Caco-2 (cell line): ENCODE measurements at regions of chr1 and their contacts with region 1.

Region 1: GRCh38 chr1:149899460-149900293 is at the start of gene BOLA1:
- DNase-seq: peak; percentile 93 to 95
- H3K4me3 ChIP-seq: peak within 1 kb of the TSS; percentile 76
- H3K4me3 Mint-ChIP-seq: peak within 1 kb of the TSS; percentile 89
- H3K27ac Mint-ChIP-seq: peak within 1 kb of the TSS; percentile 93
- H3K4me1 ChIP-seq: peaks cover 10% of the 10 kb centered on the region
- H3K4me1 Mint-ChIP-seq: peaks cover 30% of the 10 kb centered on the region
- H3K27me3 ChIP-seq: no peaks in the 10 kb centered on the region
- H3K27me3 Mint-ChIP-seq: no peaks in the 10 kb centered on the region
- CTCF ChIP-seq: peak in 1 of 2 experiments; percentile 0
- total RNA-seq, gene BOLA1: 22.7 and 22.9 TPM in 2 replicates

Region 2: GRCh38 chr1:149927503-149928387 is 28.1 kb after region 1 on chr1 and contains the start of gene SF3B4:
- CTCF ChIA-PET with region 1: no interaction called
- POLR2A ChIA-PET with region 1: interaction called, 4 read pairs
- intact Hi-C with region 1: loop called (anchors 1 kb)
- DNase-seq: peak; percentile 94 to 95
- H3K4me3 ChIP-seq: peak within 1 kb of the TSS; percentile 99
- H3K4me3 Mint-ChIP-seq: peak within 1 kb of the TSS; percentile 91
- H3K27ac Mint-ChIP-seq: peak within 1 kb of the TSS; percentile 94
- H3K4me1 ChIP-seq: peaks cover 9% of the 10 kb centered on the region
- H3K4me1 Mint-ChIP-seq: peaks cover 11% of the 10 kb centered on the region
- H3K27me3 ChIP-seq: no peaks in the 10 kb centered on the region
- H3K27me3 Mint-ChIP-seq: no peaks in the 10 kb centered on the region
- CTCF ChIP-seq: no peak
- total RNA-seq, gene SF3B4: 103 and 104 TPM in 2 replicates

Region 3: GRCh38 chr1:149937060-149937705 is 37.5 kb after region 1 on chr1:
- CTCF ChIA-PET with region 1: interaction called, 4 read pairs
- POLR2A ChIA-PET with region 1: interaction called, 6 read pairs
- intact Hi-C with region 1: loop called (anchors 2 kb)
- DNase-seq: peak; percentile 37 to 58
- H3K4me3 ChIP-seq: peak overlapping the region; percentile 30
- H3K4me3 Mint-ChIP-seq: peak overlapping the region; percentile 83
- H3K27ac Mint-ChIP-seq: peak overlapping the region; percentile 9
- H3K4me1 ChIP-seq: peaks cover 37% of the 10 kb centered on the region
- H3K4me1 Mint-ChIP-seq: peaks cover 33% of the 10 kb centered on the region
- H3K27me3 ChIP-seq: no peaks in the 10 kb centered on the region
- H3K27me3 Mint-ChIP-seq: no peaks in the 10 kb centered on the region
- CTCF ChIP-seq: peak in 1 of 2 experiments; percentile 2